ENCODE measurements at regions of chr13 and their contacts with region 1.

Region 1: DNA sequence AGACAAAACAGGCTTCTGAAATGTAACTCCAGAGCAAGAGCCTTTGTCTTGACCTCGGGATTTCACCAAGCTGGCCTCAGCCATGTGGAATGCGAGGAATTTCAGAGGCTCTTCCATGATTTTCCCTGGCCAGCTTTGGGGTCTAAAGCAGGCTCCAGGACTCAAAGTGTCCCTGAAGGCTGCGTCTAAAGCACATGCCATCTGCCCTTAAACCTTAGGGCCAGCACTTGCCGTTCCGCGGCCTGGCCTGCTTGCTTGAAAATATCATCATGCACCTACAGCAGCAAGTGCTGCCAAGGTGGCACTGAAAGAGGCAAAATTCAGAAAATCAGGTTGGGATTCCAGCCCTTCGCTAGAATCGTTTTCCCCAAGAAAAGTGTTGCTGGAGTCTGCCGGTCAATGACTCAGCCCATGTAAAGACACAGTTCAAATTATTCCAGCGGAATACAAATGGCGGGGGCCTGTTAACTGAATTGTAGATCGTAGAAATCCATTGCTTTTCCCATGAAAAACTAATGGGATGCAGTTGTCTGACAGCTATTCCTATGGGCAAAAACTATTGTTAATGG is 105.7 kb upstream of the RAP2A start:
- DNase-seq: peak; percentile 52 to 62
- H3K4me3 ChIP-seq: no peak overlapping the region
- H3K4me3 Mint-ChIP-seq: no peak overlapping the region
- H3K27ac Mint-ChIP-seq: peak overlapping the region; percentile 23
- H3K4me1 ChIP-seq: peaks cover 15% of the 10 kb centered on the region
- H3K4me1 Mint-ChIP-seq: peaks cover 15% of the 10 kb centered on the region
- H3K27me3 ChIP-seq: no peaks in the 10 kb centered on the region
- H3K27me3 Mint-ChIP-seq: no peaks in the 10 kb centered on the region
- CTCF ChIP-seq: no peak

Region 2: GRCh38 chr13:97141564-97142005 is 186.7 kb before region 1 on chr13:
- CTCF ChIA-PET with region 1: no interaction called
- POLR2A ChIA-PET with region 1: no interaction called
- intact Hi-C with region 1: no loop called
- DNase-seq: peak; percentile 91 to 95
- H3K4me3 ChIP-seq: peak overlapping the region; percentile 61
- H3K4me3 Mint-ChIP-seq: peak overlapping the region; percentile 83
- H3K27ac Mint-ChIP-seq: peak overlapping the region; percentile 91
- H3K4me1 ChIP-seq: peaks cover 23% of the 10 kb centered on the region
- H3K4me1 Mint-ChIP-seq: peaks cover 37% of the 10 kb centered on the region
- H3K27me3 ChIP-seq: no peaks in the 10 kb centered on the region
- H3K27me3 Mint-ChIP-seq: no peaks in the 10 kb centered on the region
- CTCF ChIP-seq: no peak

Region 3: DNA sequence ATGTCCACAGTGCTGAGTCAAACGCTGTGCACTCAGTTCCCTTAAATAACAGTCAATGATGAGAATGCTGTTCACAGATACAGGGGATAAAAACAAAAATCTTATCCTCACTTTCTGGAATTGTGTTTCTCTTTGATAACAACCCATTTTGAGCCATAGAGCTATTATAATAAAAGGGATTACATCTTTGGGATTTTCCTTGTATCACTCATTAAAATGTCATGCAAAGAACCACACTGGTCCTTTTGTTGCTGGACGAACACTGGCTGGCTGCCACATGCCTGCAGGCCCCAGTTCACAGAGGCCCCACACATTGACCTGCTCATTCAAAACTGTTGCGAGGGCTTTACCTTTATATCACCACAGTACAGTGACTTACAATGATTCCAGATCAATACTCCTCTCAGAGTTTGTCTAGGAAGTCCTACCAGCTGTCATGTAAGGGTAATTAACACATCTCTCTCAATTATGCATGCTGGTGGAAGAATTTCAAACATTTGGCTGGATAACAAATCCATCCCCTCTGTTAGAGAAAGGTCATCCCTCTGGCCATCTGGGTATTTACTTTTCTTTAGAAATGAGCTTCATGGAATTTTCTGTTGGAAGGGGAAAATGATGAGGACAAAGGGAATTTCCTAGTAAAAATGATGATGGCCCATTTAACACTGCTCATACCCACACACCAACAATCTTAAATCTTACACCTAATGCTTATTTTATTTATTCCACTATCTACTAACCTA is 20.3 kb before region 1 on chr13:
- CTCF ChIA-PET with region 1: no interaction called
- POLR2A ChIA-PET with region 1: no interaction called
- intact Hi-C with region 1: loop called (anchors 2 kb)
- DNase-seq: no peak
- H3K4me3 ChIP-seq: no peak overlapping the region
- H3K4me3 Mint-ChIP-seq: peak overlapping the region; percentile 13
- H3K27ac Mint-ChIP-seq: peak overlapping the region; percentile 84
- H3K4me1 ChIP-seq: peaks cover 50% of the 10 kb centered on the region
- H3K4me1 Mint-ChIP-seq: peaks cover 31% of the 10 kb centered on the region
- H3K27me3 ChIP-seq: no peaks in the 10 kb centered on the region
- H3K27me3 Mint-ChIP-seq: no peaks in the 10 kb centered on the region
- CTCF ChIP-seq: no peak

Region 4: DNA sequence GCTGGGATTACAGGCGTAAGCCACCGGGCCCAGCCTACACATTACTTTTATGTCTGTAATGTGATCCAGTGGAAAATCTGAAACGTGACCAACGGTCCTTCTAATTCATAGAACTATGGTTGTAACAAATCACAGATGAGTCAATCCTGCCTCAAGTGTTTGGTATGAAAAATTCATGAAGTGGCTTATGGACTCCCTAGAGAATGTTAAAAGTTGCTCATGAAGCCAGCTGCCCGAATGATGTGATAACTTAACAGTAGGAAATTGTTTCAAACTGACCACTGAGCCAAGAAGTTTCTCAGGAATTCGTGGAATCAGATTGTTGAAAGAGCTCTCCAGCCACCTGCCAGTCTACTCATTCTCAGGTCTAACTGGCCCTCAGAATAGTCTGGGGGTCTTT is 755.2 kb after region 1 on chr13:
- CTCF ChIA-PET with region 1: no interaction called
- POLR2A ChIA-PET with region 1: no interaction called
- intact Hi-C with region 1: no loop called
- DNase-seq: no peak
- H3K4me3 ChIP-seq: no peak overlapping the region
- H3K4me3 Mint-ChIP-seq: no peak overlapping the region
- H3K27ac Mint-ChIP-seq: no peak overlapping the region
- H3K4me1 ChIP-seq: no peaks in the 10 kb centered on the region
- H3K4me1 Mint-ChIP-seq: no peaks in the 10 kb centered on the region
- H3K27me3 ChIP-seq: no peaks in the 10 kb centered on the region
- H3K27me3 Mint-ChIP-seq: no peaks in the 10 kb centered on the region
- CTCF ChIP-seq: no peak